Mammary epithelial cell (primary cell): ENCODE measurements at regions of chr5 and their contacts with region 1.

Region 1: DNA sequence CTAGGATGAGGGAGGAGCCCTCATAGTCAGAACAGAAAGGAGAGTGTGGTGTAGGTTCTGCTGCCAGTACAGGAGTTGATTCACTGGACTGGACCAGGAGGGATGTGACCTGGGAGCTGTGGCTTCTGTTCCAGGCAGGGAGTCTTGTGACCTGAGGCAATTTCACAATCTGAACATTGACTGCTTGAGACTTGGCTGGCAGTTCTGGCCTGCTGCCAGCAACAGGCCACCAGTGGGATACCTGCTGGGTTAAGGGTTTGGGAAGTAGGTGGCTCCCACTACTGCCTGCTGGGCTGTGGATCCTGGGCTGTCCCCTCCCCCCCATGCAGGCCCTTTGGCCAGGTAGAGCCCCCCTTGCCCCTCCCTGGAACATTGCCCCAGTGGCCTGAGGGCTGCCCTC is 268.6 kb upstream of the ARRDC3 start:
- DNase-seq: no peak
- H3K4me3 ChIP-seq: no peak overlapping the region
- H3K27ac ChIP-seq: no peak overlapping the region
- H3K4me1 ChIP-seq: no peaks in the 10 kb centered on the region
- H3K27me3 ChIP-seq: no peaks in the 10 kb centered on the region
- CTCF ChIP-seq: no peak

Region 2: DNA sequence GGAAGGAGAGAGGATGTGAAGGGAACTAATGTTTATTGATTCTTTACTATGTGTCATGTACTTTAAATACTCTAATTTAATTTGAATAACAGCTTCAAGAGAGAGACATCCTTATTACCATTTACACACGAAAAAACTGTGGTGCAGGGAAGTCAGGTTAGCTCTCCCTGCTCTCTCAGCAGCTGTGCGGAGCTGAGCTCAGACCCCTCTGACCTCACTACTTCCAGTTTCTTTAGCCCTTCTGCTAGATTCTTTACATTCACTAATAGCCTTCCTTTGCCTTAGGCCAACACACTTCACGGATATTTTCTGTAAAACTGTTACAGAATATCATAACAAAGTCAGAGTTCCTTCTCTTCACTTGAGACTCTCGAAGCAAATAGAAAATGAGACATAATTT is 137.3 kb before region 1 on chr5:
- CTCF ChIA-PET with region 1: no interaction called
- dilution Hi-C with region 1: no loop called
- in situ Hi-C with region 1: no loop called
- intact Hi-C with region 1: no loop called
- DNase-seq: no peak
- H3K4me3 ChIP-seq: no peak overlapping the region
- H3K27ac ChIP-seq: no peak overlapping the region
- H3K4me1 ChIP-seq: no peaks in the 10 kb centered on the region
- H3K27me3 ChIP-seq: peaks cover 3% of the 10 kb centered on the region
- CTCF ChIP-seq: no peak

Region 3: DNA sequence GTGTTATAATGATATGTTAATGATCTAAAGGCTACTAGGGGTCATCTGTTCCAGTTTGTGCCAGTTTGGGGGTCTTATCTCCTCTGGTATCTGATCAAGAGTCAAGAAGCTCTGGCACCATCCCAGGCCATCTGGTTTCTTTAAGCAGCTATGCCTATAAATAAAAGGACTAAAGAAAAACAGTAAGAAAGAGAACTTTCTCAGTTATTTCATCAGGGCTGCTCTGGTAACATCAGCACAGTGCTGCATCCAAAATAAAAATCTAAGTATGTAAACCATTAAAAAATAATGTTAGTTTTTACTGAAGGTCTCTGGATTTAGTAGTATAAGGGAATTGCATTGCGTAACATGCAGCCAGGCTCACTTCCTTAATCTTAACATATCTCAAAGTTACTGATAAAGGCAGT is 1744.3 kb after region 1 on chr5:
- CTCF ChIA-PET with region 1: no interaction called
- dilution Hi-C with region 1: no loop called
- in situ Hi-C with region 1: no loop called
- intact Hi-C with region 1: loop called (anchors 10 kb)
- DNase-seq: no peak
- H3K4me3 ChIP-seq: no peak overlapping the region
- H3K27ac ChIP-seq: no peak overlapping the region
- H3K4me1 ChIP-seq: no peaks in the 10 kb centered on the region
- H3K27me3 ChIP-seq: no peaks in the 10 kb centered on the region
- CTCF ChIP-seq: no peak